Vagina (tissue), 2 donors: ENCODE measurements at regions of chr5 and their contacts with region 1.

Region 1: GRCh38 chr5:151719228-151720000 is 32.7 kb upstream of the SPARC start:
- DNase-seq: peak in 1 of 2 donors; percentile 54
- H3K4me3 ChIP-seq: no peak overlapping the region
- H3K27ac ChIP-seq: peak overlapping the region; percentile 73
- H3K4me1 ChIP-seq: peaks cover 21% of the 10 kb centered on the region
- H3K27me3 ChIP-seq: no peaks in the 10 kb centered on the region
- CTCF ChIP-seq: peak; percentile 19 to 33 (median 25)
- POLR2A ChIP-seq: no peak

Region 2: DNA sequence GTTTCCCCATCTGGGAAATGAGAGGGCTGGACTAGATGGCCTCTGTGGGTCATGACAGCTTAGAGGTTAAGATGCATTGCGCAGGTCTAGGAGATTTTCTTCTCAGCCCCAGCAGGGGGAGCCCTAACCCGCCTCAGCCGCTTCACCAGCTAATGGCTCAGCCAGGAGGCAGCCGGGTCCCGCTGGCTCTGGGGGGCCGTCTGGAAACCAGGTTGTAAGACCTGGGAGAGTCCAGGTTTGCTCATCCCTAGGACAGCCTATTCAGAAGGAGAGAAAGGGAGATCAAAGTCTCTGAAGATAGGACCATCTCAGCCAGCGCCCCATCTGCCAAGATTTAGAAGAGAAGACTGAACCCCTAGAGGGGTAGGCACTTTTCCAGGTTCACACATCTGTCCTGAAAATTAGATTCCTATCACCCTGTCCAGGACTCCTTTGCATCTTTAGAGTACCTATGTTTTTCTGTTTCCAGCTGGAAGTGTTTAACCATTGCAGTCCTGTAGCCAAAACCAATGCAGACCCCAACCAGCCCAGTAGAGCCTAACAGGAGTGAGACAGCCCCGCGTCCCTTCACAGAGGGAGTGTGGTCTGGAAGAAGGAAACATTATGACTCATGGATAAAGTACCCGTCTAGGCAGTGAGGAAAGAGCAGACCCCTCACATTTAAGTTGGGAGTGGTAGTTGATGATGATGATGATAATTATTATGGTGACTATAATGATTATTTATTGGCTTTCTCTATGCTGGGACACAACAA is 60.2 kb before region 1 on chr5:
- intact Hi-C with region 1: loop called (anchors 2 kb)
- DNase-seq: no peak
- H3K4me3 ChIP-seq: no peak overlapping the region
- H3K27ac ChIP-seq: peak overlapping the region; percentile 85
- H3K4me1 ChIP-seq: peaks cover 26% of the 10 kb centered on the region
- H3K27me3 ChIP-seq: no peaks in the 10 kb centered on the region
- CTCF ChIP-seq: peak; percentile 65 to 93 (median 93)
- POLR2A ChIP-seq: no peak

Region 3: GRCh38 chr5:151733358-151734063 is 14.1 kb after region 1 on chr5:
- intact Hi-C with region 1: no loop called
- DNase-seq: peak in 1 of 2 donors; percentile 52
- H3K4me3 ChIP-seq: no peak overlapping the region
- H3K27ac ChIP-seq: no peak overlapping the region
- H3K4me1 ChIP-seq: peaks cover 15% of the 10 kb centered on the region
- H3K27me3 ChIP-seq: no peaks in the 10 kb centered on the region
- CTCF ChIP-seq: no peak
- POLR2A ChIP-seq: no peak